ENCODE measurements at regions of chr11 and their contacts with region 1.

Region 1: DNA sequence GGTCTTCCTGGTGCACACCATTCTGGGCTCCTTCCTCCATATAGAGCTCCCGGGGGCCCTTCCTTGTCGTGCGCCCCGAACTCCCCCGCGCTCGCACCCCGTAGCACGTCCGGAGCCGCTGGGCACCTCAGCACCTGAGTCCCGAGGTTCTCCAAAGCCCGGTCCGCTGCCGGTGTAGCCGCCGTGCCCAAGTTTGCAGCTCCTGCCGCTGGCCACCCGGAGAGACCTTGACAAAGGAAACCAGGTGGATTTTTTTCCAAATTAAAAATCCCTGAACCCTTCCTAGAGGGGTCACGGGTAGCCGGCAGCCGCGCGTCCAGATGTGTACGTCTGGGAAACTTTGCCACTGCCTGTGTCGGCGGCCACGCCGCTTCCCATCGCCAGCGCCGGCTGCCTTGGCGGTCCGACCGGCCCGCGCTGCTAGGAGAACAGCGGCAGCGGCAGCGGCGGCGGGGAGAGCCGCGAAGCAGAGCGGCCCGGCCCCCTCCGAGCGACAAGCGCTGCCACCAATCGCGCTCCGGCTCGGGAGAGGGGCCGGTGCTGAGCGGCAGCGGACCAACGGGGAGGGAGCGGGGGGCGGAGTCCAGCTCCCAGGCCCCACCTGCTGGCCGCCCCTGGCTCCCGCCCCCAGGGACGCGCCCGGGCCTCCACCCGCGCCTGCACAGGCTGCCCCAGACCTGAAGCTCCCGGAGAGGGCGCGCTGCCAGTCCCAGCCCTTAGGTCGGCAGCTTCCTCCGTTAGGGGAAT is at the start of gene GALNT18:
- DNase-seq: peak; percentile 93 to 94
- ATAC-seq: peak; percentile 93 to 98 (median 96)
- H3K4me3 ChIP-seq: peak within 1 kb of the TSS; percentile 70 to 92 (median 78)
- H3K27ac ChIP-seq: peak within 1 kb of the TSS; percentile 24 to 88 (median 81)
- H3K4me1 ChIP-seq: peaks cover 0 to 58% (median 16%) of the 10 kb centered on the region in 9 donors
- H3K27me3 ChIP-seq: peaks cover 0 to 40% (median 0%) of the 10 kb centered on the region in 7 donors
- CTCF ChIP-seq: peak; percentile 40 to 73 (median 57)
- total RNA-seq, gene GALNT18: 9.8 to 29.0 (median 15.6) TPM

Region 2: GRCh38 chr11:10933455-10934292 is 688.1 kb before region 1 on chr11:
- intact Hi-C with region 1: loop called in 1 of 10 experiments (anchors 10 kb)
- DNase-seq: peak; percentile 87 to 91
- ATAC-seq: peak; percentile 78 to 93 (median 89)
- H3K4me3 ChIP-seq: peak overlapping the region; percentile 7 to 56 (median 52)
- H3K27ac ChIP-seq: peak overlapping the region; percentile 28 to 89 (median 72)
- H3K4me1 ChIP-seq: peaks cover 0 to 33% (median 17%) of the 10 kb centered on the region in 9 donors
- H3K27me3 ChIP-seq: peaks cover 0 to 49% (median 0%) of the 10 kb centered on the region in 7 donors
- CTCF ChIP-seq: peak; percentile 90 to 99 (median 95)

Region 3: DNA sequence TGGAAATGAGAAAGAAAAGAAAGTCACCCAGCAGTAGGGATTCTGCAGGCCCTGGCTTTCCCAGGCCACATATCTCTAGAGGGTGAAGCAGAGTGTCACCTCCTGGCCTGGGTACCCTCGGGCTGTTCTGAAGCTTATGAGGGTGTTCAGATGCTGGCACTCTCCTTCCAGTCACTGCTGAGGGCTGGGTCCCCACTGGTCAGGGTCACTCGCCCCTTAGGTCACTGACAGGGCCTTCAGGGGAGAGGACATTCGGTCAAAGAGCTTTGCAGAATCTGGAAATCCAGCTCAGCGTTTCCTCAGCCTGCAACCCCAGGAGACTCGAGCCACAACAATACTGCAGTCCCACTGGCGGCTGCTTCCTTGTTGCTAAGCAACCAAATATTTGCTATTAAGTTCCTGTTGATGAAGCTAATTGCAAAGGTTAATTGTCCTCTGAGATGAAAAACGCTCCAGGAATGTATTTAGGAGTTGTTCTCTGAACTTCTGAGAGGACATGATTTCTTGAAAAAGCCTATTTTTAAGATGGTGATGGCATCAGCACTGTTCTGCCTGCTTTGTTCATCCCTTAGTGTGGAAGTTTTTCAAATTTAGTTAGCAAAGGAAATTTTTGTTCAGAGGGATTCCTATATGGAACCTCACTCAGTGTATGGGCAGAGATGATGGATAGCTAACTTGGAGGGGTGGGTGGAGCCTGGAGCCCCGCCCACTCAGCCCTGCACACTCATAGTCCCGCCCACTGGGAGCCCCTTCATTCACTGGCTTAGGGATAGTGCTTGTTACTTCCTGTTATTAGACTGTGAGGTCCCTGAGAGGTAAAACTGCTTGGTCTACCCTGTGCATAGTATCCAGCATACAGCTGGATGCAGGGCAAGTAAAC is 377.9 kb before region 1 on chr11:
- intact Hi-C with region 1: loop called in 1 of 10 experiments (anchors 5 kb)
- DNase-seq: peak; percentile 46 to 70
- ATAC-seq: peak; percentile 78 to 92 (median 86)
- H3K4me3 ChIP-seq: no peak overlapping the region
- H3K27ac ChIP-seq: peak overlapping the region; percentile 37 to 89 (median 76)
- H3K4me1 ChIP-seq: peaks cover 10 to 39% (median 27%) of the 10 kb centered on the region in 9 donors
- H3K27me3 ChIP-seq: no peaks in the 10 kb centered on the region
- CTCF ChIP-seq: no peak

Region 4: GRCh38 chr11:11400635-11401232 is 221.0 kb before region 1 on chr11:
- intact Hi-C with region 1: loop called in 4 of 10 experiments (anchors 5 to 10 kb)
- DNase-seq: no peak
- ATAC-seq: no peak
- H3K4me3 ChIP-seq: no peak overlapping the region
- H3K27ac ChIP-seq: no peak overlapping the region
- H3K4me1 ChIP-seq: peaks cover 0 to 51% (median 13%) of the 10 kb centered on the region in 9 donors
- H3K27me3 ChIP-seq: no peaks in the 10 kb centered on the region
- CTCF ChIP-seq: peak in 6 of 9 donors; percentile 8 to 28 (median 26)

Region 5: GRCh38 chr11:11422411-11423128 is 199.2 kb before region 1 on chr11:
- intact Hi-C with region 1: loop called in 1 of 10 experiments (anchors 10 kb)
- DNase-seq: no peak
- ATAC-seq: no peak
- H3K4me3 ChIP-seq: no peak overlapping the region
- H3K27ac ChIP-seq: no peak overlapping the region
- H3K4me1 ChIP-seq: peaks cover 5 to 68% (median 35%) of the 10 kb centered on the region in 9 donors
- H3K27me3 ChIP-seq: peaks cover 0 to 20% (median 0%) of the 10 kb centered on the region in 7 donors
- CTCF ChIP-seq: no peak

Region 6: GRCh38 chr11:11538277-11538960 is 83.3 kb before region 1 on chr11:
- intact Hi-C with region 1: loop called in 7 of 10 experiments (anchors 2 to 10 kb)
- DNase-seq: peak; percentile 77 to 79
- ATAC-seq: peak; percentile 57 to 88 (median 78)
- H3K4me3 ChIP-seq: no peak overlapping the region
- H3K27ac ChIP-seq: peak overlapping the region; percentile 77 to 95 (median 84)
- H3K4me1 ChIP-seq: peaks cover 30 to 100% (median 73%) of the 10 kb centered on the region in 9 donors
- H3K27me3 ChIP-seq: no peaks in the 10 kb centered on the region
- CTCF ChIP-seq: no peak

Region 7: DNA sequence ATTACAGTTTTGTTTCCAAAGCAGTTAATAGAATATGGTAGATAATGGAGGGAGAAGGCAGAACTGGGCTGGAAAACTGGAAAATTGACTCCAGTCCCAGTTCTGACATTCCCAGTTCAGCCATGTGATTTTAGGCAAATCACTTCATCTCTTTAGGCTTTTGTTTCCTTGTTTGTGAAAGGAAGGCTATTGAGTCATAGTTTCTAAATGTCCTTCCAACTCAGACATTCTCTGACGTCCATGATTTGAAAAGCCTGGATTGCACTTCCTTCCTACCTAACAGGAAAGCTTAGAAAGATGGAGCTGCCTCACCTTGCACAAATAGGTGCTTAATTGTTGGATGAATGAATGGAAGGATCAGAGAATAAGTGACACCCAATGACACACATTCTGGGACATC is 19.8 kb after region 1 on chr11:
- intact Hi-C with region 1: no loop called
- DNase-seq: no peak
- ATAC-seq: peak in 3 of 8 donors; percentile 55 to 70 (median 64)
- H3K4me3 ChIP-seq: no peak overlapping the region
- H3K27ac ChIP-seq: peak overlapping the region in 1 of 10 donors; percentile 36
- H3K4me1 ChIP-seq: peaks cover 0 to 6% (median 0%) of the 10 kb centered on the region in 9 donors
- H3K27me3 ChIP-seq: no peaks in the 10 kb centered on the region
- CTCF ChIP-seq: no peak

Region 8: GRCh38 chr11:11677672-11678348 is 56.1 kb after region 1 on chr11:
- intact Hi-C with region 1: no loop called
- DNase-seq: no peak
- ATAC-seq: peak in 2 of 8 donors; percentile 55 to 67
- H3K4me3 ChIP-seq: no peak overlapping the region
- H3K27ac ChIP-seq: no peak overlapping the region
- H3K4me1 ChIP-seq: peaks cover 0 to 9% (median 0%) of the 10 kb centered on the region in 9 donors
- H3K27me3 ChIP-seq: no peaks in the 10 kb centered on the region
- CTCF ChIP-seq: no peak